HepG2 (cell line): ENCODE measurements at regions of chr7 and their contacts with region 1.

Region 1: DNA sequence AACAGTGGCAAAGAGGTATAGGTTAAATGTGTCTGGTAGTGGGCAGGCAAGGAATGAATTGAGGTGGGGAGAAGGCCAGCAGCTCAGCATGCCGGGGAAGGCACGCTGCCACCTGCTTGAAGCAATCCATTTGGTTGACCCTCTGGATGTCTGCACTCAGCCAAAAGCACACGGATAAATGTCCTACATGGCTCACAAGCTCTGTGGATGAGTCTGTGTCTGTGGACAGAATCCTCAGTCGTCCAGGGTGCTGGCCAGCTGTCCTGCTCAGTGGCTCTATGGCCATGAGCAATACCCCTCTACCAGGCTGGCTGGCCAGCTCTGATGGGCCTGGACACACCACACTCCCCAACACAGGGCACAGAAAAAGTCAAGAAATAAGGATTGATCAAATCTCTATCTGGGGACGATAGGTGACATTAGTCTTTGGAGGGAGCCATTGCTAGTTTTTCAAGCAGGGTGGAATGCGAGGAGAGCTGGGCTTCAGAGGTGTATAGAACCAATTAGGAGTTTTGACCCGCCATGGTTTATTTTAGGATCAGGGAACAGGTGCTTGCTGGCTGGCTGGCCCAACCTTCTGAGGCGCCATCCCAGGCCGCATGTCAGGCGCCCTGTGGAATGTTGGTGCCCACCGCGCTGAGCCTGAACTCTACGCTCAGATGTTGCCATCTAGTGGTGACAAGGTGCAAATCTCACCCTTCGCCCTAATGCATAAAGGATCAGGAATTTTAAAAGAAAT is 493.4 kb downstream of the TNS3 start:
- DNase-seq: peak; percentile 46
- ATAC-seq: peak; percentile 99
- H3K4me3 ChIP-seq: no peak overlapping the region
- H3K27ac ChIP-seq: no peak overlapping the region
- H3K4me1 ChIP-seq: no peaks in the 10 kb centered on the region
- H3K27me3 ChIP-seq: 0 out of 5 replicates have a peak, but pooled peaks cover 0 to 7% of the 10 kb centered on the region in 2 experiments
- CTCF ChIP-seq: peak; percentile 87
- EP300 ChIP-seq: no peak
- POLR2A ChIP-seq: no peak
- RAD21 ChIP-seq: peak; percentile 79

Region 2: DNA sequence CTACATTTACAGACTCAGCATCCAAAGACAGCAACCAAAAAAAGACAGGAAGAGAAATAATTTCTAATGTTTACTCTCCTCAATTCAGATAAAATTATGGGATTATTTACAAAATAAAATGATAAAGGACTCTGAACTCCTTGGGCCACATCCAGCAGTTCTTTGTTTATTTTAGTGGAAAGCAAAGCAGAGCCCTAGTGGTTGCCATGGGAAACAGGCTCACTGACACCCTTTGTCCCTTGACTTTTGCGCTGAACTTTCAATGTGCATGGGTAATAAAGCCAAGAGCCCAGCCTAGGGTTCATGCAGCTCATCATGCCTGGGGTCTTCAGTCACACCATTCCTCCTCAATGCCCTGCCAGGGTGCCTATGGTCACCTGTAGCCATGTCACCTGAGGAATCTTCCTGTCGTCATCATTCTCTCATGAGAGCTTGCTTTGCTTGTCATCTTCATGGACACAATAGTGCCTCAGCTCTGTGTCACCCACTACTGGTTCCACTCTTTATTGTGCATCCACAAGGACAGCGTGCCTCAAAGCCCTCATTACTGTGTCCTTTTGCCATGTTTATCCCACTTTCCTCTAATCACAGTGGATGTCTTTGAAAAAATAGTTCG is 724.7 kb before region 1 on chr7:
- CTCF ChIA-PET with region 1: no interaction called
- POLR2A ChIA-PET with region 1: no interaction called
- in situ Hi-C with region 1: loop called (anchors 5 kb)
- intact Hi-C with region 1: no loop called
- DNase-seq: peak; percentile 36
- ATAC-seq: peak; percentile 87
- H3K4me3 ChIP-seq: no peak overlapping the region
- H3K27ac ChIP-seq: no peak overlapping the region
- H3K4me1 ChIP-seq: peaks cover 15% of the 10 kb centered on the region
- H3K27me3 ChIP-seq: no peaks in the 10 kb centered on the region
- CTCF ChIP-seq: no peak
- EP300 ChIP-seq: no peak
- POLR2A ChIP-seq: no peak
- RAD21 ChIP-seq: no peak

Region 3: DNA sequence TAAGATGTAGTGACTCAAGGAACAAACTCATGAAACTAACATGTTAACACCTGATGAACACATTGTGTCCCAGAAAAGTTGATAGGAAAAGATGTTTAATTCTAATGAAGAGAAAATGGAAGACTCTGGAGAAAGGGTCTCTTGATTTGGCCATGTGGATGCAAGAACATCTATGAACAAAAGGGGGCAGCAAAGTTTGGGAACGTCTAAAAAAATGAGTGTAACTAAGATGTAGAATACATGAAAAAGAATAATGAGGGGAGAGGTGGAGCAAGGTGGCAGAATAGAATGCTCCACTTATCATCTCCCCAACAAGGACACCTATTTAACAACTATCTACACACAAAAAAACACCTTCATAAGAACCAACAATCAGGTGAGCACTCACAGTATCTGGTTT is 311.7 kb before region 1 on chr7:
- CTCF ChIA-PET with region 1: no interaction called
- POLR2A ChIA-PET with region 1: no interaction called
- in situ Hi-C with region 1: no loop called
- intact Hi-C with region 1: loop called (anchors 2 kb)
- DNase-seq: no peak
- ATAC-seq: no peak
- H3K4me3 ChIP-seq: no peak overlapping the region
- H3K27ac ChIP-seq: no peak overlapping the region
- H3K4me1 ChIP-seq: no peaks in the 10 kb centered on the region
- H3K27me3 ChIP-seq: no peaks in the 10 kb centered on the region
- CTCF ChIP-seq: peak; percentile 32
- EP300 ChIP-seq: no peak
- POLR2A ChIP-seq: no peak
- RAD21 ChIP-seq: no peak